ENCODE measurements at regions of chr7 and their contacts with region 1.

Region 1: DNA sequence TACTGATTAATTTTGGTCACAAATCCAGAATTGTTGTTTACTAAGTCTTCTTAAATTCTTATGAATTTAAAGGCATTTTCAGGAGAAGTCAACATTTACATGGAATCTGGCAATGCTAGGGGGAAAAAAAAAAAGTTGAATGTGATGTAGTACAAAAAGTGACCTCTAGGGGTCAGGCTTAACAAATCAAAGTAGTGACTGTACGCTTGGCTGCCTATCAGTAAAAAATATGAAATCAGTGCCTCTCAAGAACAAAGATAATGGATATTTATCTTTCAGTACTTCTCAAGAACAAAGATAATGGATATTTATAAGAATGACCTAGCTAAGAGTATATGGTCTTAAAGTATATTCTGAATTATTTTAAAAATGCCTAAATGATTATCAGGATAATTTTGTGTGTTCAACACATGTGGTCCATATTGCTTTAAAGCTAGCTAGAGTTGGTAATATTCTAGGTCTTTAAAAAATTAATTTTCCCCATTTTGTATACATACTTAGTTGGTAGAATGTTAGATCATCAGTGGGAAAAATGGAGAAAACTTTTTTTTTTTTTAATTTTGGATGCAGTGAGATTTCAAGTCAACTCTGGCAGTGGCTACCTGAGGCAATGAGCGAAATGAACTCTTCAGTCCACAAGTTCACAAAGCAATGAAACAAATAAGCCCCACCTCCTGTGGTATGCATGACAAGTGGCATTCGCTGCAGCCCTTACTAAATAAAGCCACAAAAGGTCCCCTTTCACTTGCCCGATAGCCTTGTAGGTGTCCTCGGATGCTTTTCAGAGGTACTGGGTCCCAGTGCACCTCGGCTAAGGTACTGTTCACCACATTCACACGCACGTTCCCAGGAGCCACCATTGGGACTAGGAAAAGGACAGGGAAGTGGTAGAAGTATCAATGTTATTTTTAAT is 51.2 kb upstream of the LAMB4 start:
- DNase-seq: no peak
- ATAC-seq: peak; percentile 73
- H3K4me3 ChIP-seq: no peak overlapping the region
- H3K27ac ChIP-seq: no peak overlapping the region
- H3K4me1 ChIP-seq: no peaks in the 10 kb centered on the region
- H3K27me3 ChIP-seq: no peaks in the 10 kb centered on the region

Region 2: GRCh38 chr7:108132551-108133265 is 48.6 kb before region 1 on chr7:
- intact Hi-C with region 1: no loop called
- DNase-seq: no peak
- ATAC-seq: no peak
- H3K4me3 ChIP-seq: no peak overlapping the region
- H3K27ac ChIP-seq: no peak overlapping the region
- H3K4me1 ChIP-seq: no peaks in the 10 kb centered on the region
- H3K27me3 ChIP-seq: no peaks in the 10 kb centered on the region

Region 3: DNA sequence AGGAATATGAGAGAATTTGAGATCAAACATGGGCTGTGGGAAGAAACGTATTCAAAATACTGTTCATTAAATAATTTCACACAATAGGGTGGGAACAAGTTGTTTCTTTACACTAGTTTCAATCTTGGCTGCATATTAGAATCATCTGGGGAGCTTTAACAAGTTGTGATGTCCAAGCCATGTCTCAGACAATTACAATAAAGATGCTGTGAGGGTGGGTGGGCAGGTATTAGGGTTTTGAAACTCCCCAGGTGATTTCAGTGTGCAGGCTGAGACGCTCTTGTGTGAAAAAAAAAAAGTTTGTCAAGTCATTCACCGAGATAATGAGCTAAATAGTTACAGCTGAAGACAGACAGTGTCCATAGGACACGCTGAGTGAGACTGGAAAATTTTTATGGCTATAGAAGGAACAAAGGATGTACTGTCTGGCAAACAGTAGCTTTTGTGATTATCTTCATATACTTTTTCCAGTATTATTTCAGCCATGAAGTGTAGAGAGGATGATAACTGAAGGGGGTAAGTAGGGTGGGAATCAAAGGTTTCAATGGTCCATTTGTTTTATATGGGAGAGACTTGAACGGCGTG is 38.6 kb before region 1 on chr7:
- intact Hi-C with region 1: no loop called
- DNase-seq: no peak
- ATAC-seq: no peak
- H3K4me3 ChIP-seq: no peak overlapping the region
- H3K27ac ChIP-seq: no peak overlapping the region
- H3K4me1 ChIP-seq: no peaks in the 10 kb centered on the region
- H3K27me3 ChIP-seq: no peaks in the 10 kb centered on the region

Region 4: DNA sequence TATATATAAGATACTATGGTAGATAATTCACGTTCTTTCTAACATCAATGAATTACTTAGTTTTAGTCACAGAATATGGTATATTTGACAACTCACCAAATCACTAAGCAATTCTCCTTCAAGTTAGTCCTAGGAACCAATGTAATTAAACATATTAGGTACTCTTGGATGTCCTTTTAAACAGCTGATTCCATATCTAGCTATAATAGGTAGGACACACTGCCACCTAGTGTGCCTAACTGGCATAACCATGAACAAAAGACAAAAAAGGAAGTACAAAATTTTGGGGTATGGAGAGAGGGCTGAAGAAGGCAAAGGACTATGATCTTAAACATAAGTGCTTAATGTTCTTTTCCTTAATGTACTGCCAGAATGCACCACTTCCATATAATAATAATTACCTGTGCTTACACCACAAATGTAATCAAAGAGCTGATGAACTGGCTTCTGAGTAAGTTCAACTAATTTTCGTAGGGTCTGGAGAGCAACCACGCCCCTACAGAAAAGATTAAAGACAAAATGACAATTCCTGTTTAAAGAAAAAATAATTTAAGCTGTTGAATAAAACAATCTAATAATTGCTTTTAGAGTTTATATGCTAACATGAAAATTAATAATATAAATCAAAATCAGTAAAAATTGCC is 315.9 kb after region 1 on chr7:
- intact Hi-C with region 1: loop called (anchors 2 to 5 kb)
- DNase-seq: no peak
- ATAC-seq: no peak
- H3K4me3 ChIP-seq: no peak overlapping the region
- H3K27ac ChIP-seq: no peak overlapping the region
- H3K4me1 ChIP-seq: no peaks in the 10 kb centered on the region
- H3K27me3 ChIP-seq: no peaks in the 10 kb centered on the region

Region 5: GRCh38 chr7:108541478-108541877 is 360.1 kb after region 1 on chr7:
- intact Hi-C with region 1: no loop called
- DNase-seq: no peak
- ATAC-seq: no peak
- H3K4me3 ChIP-seq: no peak overlapping the region
- H3K27ac ChIP-seq: no peak overlapping the region
- H3K4me1 ChIP-seq: no peaks in the 10 kb centered on the region
- H3K27me3 ChIP-seq: no peaks in the 10 kb centered on the region